Transverse colon (tissue), 4 donors: ENCODE measurements at regions of chr18 and their contacts with region 1.

Region 1: GRCh38 chr18:74196220-74197119 is 48.1 kb downstream of the TIMM21 start:
- DNase-seq: peak; percentile 39
- H3K4me3 ChIP-seq: peak overlapping the region in 3 of 4 donors; percentile 11 to 41 (median 19)
- H3K27ac ChIP-seq: peak overlapping the region in 2 of 4 donors; percentile 30 to 32
- H3K4me1 ChIP-seq: peaks cover 0 to 24% (median 10%) of the 10 kb centered on the region in 4 donors
- H3K27me3 ChIP-seq: no peaks in the 10 kb centered on the region
- CTCF ChIP-seq: peak; percentile 89 to 97 (median 95)
- EP300 ChIP-seq: no peak
- POLR2A ChIP-seq: no peak

Region 2: GRCh38 chr18:74331404-74331803 is 134.9 kb after region 1 on chr18:
- in situ Hi-C with region 1: loop called in 1 of 4 experiments (anchors 10 kb)
- intact Hi-C with region 1: no loop called
- DNase-seq: no peak
- H3K4me3 ChIP-seq: no peak overlapping the region
- H3K27ac ChIP-seq: no peak overlapping the region
- H3K4me1 ChIP-seq: no peaks in the 10 kb centered on the region
- H3K27me3 ChIP-seq: no peaks in the 10 kb centered on the region
- CTCF ChIP-seq: peak in 4 of 5 experiments; percentile 9 to 14 (median 10)
- EP300 ChIP-seq: no peak
- POLR2A ChIP-seq: no peak

Region 3: DNA sequence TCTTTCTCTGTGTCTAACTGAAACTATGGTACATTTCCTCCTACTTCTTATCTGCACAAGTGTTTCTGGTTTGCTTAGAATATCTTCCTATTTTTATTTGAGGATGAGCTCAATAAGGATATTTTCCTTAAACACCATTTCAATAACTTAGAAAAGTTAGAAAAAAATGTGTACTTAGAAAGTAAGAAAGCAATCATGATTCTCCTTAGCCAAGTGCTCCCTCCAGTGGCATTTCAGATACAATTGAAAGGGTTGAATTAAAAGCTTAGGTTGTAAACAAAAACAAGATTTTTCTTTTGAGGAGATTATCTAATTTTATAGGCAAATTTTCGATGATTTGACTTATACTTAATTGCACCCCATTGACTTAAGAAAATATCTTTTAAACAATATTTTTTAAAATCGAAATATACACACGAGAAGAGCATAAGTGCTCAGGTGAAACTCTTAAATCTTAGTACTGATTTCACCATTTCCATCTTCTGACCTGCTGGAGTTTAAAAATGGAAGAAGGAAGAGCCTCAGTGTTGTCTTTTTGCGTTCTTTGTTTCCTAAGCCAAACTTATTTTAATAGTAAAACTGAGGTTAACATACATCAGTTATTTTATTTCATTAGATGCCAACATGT is 146.1 kb after region 1 on chr18:
- in situ Hi-C with region 1: loop called (anchors 5 to 10 kb)
- intact Hi-C with region 1: loop called (anchors 5 kb)
- DNase-seq: peak; percentile 21
- H3K4me3 ChIP-seq: no peak overlapping the region
- H3K27ac ChIP-seq: no peak overlapping the region
- H3K4me1 ChIP-seq: no peaks in the 10 kb centered on the region
- H3K27me3 ChIP-seq: no peaks in the 10 kb centered on the region
- CTCF ChIP-seq: peak; percentile 66 to 78 (median 71)
- EP300 ChIP-seq: no peak
- POLR2A ChIP-seq: no peak

Region 4: GRCh38 chr18:74631623-74632283 is 435.3 kb after region 1 on chr18:
- in situ Hi-C with region 1: no loop called
- intact Hi-C with region 1: no loop called
- DNase-seq: no peak
- H3K4me3 ChIP-seq: no peak overlapping the region
- H3K27ac ChIP-seq: no peak overlapping the region
- H3K4me1 ChIP-seq: peaks cover 0 to 6% (median 0%) of the 10 kb centered on the region in 4 donors
- H3K27me3 ChIP-seq: no peaks in the 10 kb centered on the region
- CTCF ChIP-seq: no peak
- EP300 ChIP-seq: no peak
- POLR2A ChIP-seq: no peak